CD14-positive monocyte (primary cell): ENCODE measurements at regions of chr19 and their contacts with region 1.

Region 1: GRCh38 chr19:17075035-17075863 is at the starts of genes HAUS8 and MYO9B:
- DNase-seq: peak; percentile 99 to 100 (median 100)
- H3K4me3 ChIP-seq: peak within 1 kb of the TSS; percentile 92 to 100 (median 93)
- H3K4me3 Mint-ChIP-seq: peak within 1 kb of the TSS; percentile 99 to 100
- H3K27ac ChIP-seq: peak within 1 kb of the TSS; percentile 84 to 97
- H3K27ac Mint-ChIP-seq: peak within 1 kb of the TSS; percentile 97 to 100 (median 98)
- H3K4me1 ChIP-seq: peaks cover 44 to 49% of the 10 kb centered on the region in 2 donors
- H3K4me1 Mint-ChIP-seq: peaks cover 54% of the 10 kb centered on the region
- H3K27me3 ChIP-seq: no peaks in the 10 kb centered on the region
- H3K27me3 Mint-ChIP-seq: peaks cover 0 to 3% (median 0%) of the 10 kb centered on the region in 3 donors
- CTCF ChIP-seq: no peak
- polyA plus RNA-seq, gene HAUS8: 2.5 to 9.3 (median 4.4) TPM
- polyA plus RNA-seq, gene MYO9B: 5.9 to 366 (median 7.5) TPM

Region 2: GRCh38 chr19:17090583-17090982 is 15.3 kb after region 1 on chr19:
- intact Hi-C with region 1: loop called in 1 of 2 experiments (anchors 2 kb)
- DNase-seq: peak; percentile 94 to 99 (median 96)
- H3K4me3 ChIP-seq: peak overlapping the region in 1 of 3 experiments; percentile 6
- H3K4me3 Mint-ChIP-seq: peak overlapping the region in 1 of 2 donors; percentile 77
- H3K27ac ChIP-seq: peak overlapping the region; percentile 96 to 100
- H3K27ac Mint-ChIP-seq: peak overlapping the region; percentile 96 to 100 (median 99)
- H3K4me1 ChIP-seq: peaks cover 60 to 74% of the 10 kb centered on the region in 2 donors
- H3K4me1 Mint-ChIP-seq: peaks cover 73% of the 10 kb centered on the region
- H3K27me3 ChIP-seq: no peaks in the 10 kb centered on the region
- H3K27me3 Mint-ChIP-seq: peaks cover 0 to 6% (median 2%) of the 10 kb centered on the region in 3 donors
- CTCF ChIP-seq: peak; percentile 24

Region 3: GRCh38 chr19:17107525-17108452 is 32.5 kb after region 1 on chr19:
- intact Hi-C with region 1: loop called (anchors 5 kb)
- DNase-seq: peak; percentile 95 to 98 (median 95)
- H3K4me3 ChIP-seq: peak overlapping the region in 1 of 3 experiments; percentile 51
- H3K4me3 Mint-ChIP-seq: peak overlapping the region; percentile 65 to 79
- H3K27ac ChIP-seq: peak overlapping the region; percentile 95
- H3K27ac Mint-ChIP-seq: peak overlapping the region; percentile 97 to 99 (median 99)
- H3K4me1 ChIP-seq: peaks cover 86 to 88% of the 10 kb centered on the region in 2 donors
- H3K4me1 Mint-ChIP-seq: peaks cover 89% of the 10 kb centered on the region
- H3K27me3 ChIP-seq: no peaks in the 10 kb centered on the region
- H3K27me3 Mint-ChIP-seq: peaks cover 0 to 4% (median 0%) of the 10 kb centered on the region in 3 donors
- CTCF ChIP-seq: no peak

Region 4: GRCh38 chr19:17135001-17135853 is 60.0 kb after region 1 on chr19:
- intact Hi-C with region 1: loop called in 1 of 2 experiments (anchors 5 kb)
- DNase-seq: peak; percentile 63 to 69 (median 64)
- H3K4me3 ChIP-seq: peak overlapping the region in 1 of 3 experiments; percentile 20
- H3K4me3 Mint-ChIP-seq: peak overlapping the region; percentile 72 to 82
- H3K27ac ChIP-seq: peak overlapping the region; percentile 55 to 74
- H3K27ac Mint-ChIP-seq: peak overlapping the region; percentile 66 to 96 (median 90)
- H3K4me1 ChIP-seq: peaks cover 23 to 26% of the 10 kb centered on the region in 2 donors
- H3K4me1 Mint-ChIP-seq: peaks cover 47% of the 10 kb centered on the region
- H3K27me3 ChIP-seq: no peaks in the 10 kb centered on the region
- H3K27me3 Mint-ChIP-seq: peaks cover 0 to 1% (median 0%) of the 10 kb centered on the region in 3 donors
- CTCF ChIP-seq: no peak

Region 5: GRCh38 chr19:17156927-17157302 is 81.7 kb after region 1 on chr19:
- intact Hi-C with region 1: loop called in 1 of 2 experiments (anchors 5 kb)
- DNase-seq: peak; percentile 87 to 92 (median 91)
- H3K4me3 ChIP-seq: no peak overlapping the region
- H3K4me3 Mint-ChIP-seq: no peak overlapping the region
- H3K27ac ChIP-seq: peak overlapping the region; percentile 86 to 95
- H3K27ac Mint-ChIP-seq: peak overlapping the region; percentile 91 to 97 (median 96)
- H3K4me1 ChIP-seq: peaks cover 15 to 17% of the 10 kb centered on the region in 2 donors
- H3K4me1 Mint-ChIP-seq: peaks cover 21% of the 10 kb centered on the region
- H3K27me3 ChIP-seq: no peaks in the 10 kb centered on the region
- H3K27me3 Mint-ChIP-seq: no peaks in the 10 kb centered on the region
- CTCF ChIP-seq: no peak

Region 6: DNA sequence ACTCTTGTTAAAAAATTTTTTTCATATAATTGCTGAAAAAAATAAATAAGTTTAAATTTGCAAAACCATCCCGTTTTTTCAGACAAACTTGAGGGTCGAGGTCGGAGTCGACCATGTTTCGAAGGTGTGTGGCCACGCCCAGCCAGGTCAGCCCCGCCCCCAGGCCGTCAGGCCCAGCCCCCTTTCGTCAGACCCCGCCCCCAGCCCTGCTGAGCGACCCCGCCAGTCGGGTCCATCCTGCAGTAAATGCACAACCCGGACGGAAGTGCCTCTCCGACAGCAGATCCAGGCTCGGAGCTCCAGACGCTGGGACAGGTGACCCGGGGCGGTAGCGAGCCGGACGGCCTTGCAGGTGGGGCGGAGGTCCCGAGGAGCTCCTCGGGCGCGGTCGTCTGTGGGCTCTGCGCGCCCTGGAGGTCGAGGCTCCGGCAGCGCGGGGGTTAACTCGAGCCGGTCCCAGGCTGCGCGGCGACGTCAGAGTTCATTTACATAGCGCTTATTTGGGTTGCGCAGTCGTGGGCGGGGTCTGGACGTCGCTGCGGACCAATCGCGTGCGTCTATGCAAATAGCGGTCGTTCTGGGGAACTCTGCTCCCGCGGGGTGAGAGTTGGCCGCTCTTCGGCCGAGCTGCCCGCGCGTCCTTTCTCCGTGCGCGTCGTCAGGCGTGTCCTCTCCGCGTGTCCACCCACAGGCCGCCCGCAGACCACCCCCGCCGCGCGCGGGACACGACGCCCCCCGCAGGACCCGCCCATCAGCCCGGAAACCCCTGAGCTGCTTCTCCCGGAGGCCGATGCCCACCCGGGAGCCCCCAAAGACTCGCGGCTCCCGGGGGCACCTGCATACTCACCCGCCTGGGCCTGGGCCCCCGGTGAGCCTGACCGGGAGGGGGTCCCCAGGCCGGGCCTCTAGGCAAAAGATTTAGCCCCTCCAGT is 151.0 kb after region 1 on chr19 and contains the start of gene OCEL1:
- intact Hi-C with region 1: loop called in 1 of 2 experiments (anchors 5 kb)
- DNase-seq: peak; percentile 98
- H3K4me3 ChIP-seq: peak within 1 kb of the TSS; percentile 52 to 88 (median 74)
- H3K4me3 Mint-ChIP-seq: peak within 1 kb of the TSS; percentile 92 to 97
- H3K27ac ChIP-seq: peak within 1 kb of the TSS; percentile 79 to 90
- H3K27ac Mint-ChIP-seq: peak within 1 kb of the TSS; percentile 94 to 99 (median 97)
- H3K4me1 ChIP-seq: peaks cover 24 to 38% of the 10 kb centered on the region in 2 donors
- H3K4me1 Mint-ChIP-seq: peaks cover 22% of the 10 kb centered on the region
- H3K27me3 ChIP-seq: no peaks in the 10 kb centered on the region
- H3K27me3 Mint-ChIP-seq: peaks cover 0 to 3% (median 0%) of the 10 kb centered on the region in 3 donors
- CTCF ChIP-seq: no peak
- polyA plus RNA-seq, gene OCEL1: 31.8 to 59.9 (median 57.6) TPM